ENCODE measurements at regions of chr15 and their contacts with region 1.

Region 1: GRCh38 chr15:85785887-85786780 is 8.6 kb downstream of the KLHL25 start:
- DNase-seq: no peak
- ATAC-seq: peak; percentile 61
- H3K4me3 ChIP-seq: no peak overlapping the region
- H3K27ac ChIP-seq: peak overlapping the region in 1 of 2 donors; percentile 49
- H3K4me1 ChIP-seq: no peaks in the 10 kb centered on the region
- H3K27me3 ChIP-seq: no peaks in the 10 kb centered on the region

Region 2: GRCh38 chr15:85771781-85772445 is 14.2 kb before region 1 on chr15:
- intact Hi-C with region 1: loop called in 1 of 2 experiments (anchors 1 kb)
- DNase-seq: peak; percentile 86 to 91
- ATAC-seq: peak; percentile 85
- H3K4me3 ChIP-seq: no peak overlapping the region
- H3K27ac ChIP-seq: peak overlapping the region in 1 of 2 donors; percentile 58
- H3K4me1 ChIP-seq: no peaks in the 10 kb centered on the region
- H3K27me3 ChIP-seq: no peaks in the 10 kb centered on the region

Region 3: GRCh38 chr15:85886309-85886811 is 100.2 kb after region 1 on chr15:
- intact Hi-C with region 1: no loop called
- DNase-seq: no peak
- ATAC-seq: no peak
- H3K4me3 ChIP-seq: no peak overlapping the region
- H3K27ac ChIP-seq: no peak overlapping the region
- H3K4me1 ChIP-seq: no peaks in the 10 kb centered on the region
- H3K27me3 ChIP-seq: peaks cover 0 to 4% of the 10 kb centered on the region in 2 donors

Measured in aorta (tissue), 5 donors.